Activated naive CD4-positive, alpha-beta T cell treated with anti-CD3 and anti-CD28 coated beads for 36 hours (primary cell): ENCODE measurements at regions of chr10 and their contacts with region 1.

Region 1: GRCh38 chr10:121753726-121754476 is 155.7 kb upstream of the FGFR2 start:
- DNase-seq: peak; percentile 24
- H3K4me3 Mint-ChIP-seq: no peak overlapping the region
- H3K27ac Mint-ChIP-seq: peak overlapping the region; percentile 27
- H3K4me1 Mint-ChIP-seq: peaks cover 19% of the 10 kb centered on the region
- H3K27me3 Mint-ChIP-seq: no peaks in the 10 kb centered on the region

Region 2: DNA sequence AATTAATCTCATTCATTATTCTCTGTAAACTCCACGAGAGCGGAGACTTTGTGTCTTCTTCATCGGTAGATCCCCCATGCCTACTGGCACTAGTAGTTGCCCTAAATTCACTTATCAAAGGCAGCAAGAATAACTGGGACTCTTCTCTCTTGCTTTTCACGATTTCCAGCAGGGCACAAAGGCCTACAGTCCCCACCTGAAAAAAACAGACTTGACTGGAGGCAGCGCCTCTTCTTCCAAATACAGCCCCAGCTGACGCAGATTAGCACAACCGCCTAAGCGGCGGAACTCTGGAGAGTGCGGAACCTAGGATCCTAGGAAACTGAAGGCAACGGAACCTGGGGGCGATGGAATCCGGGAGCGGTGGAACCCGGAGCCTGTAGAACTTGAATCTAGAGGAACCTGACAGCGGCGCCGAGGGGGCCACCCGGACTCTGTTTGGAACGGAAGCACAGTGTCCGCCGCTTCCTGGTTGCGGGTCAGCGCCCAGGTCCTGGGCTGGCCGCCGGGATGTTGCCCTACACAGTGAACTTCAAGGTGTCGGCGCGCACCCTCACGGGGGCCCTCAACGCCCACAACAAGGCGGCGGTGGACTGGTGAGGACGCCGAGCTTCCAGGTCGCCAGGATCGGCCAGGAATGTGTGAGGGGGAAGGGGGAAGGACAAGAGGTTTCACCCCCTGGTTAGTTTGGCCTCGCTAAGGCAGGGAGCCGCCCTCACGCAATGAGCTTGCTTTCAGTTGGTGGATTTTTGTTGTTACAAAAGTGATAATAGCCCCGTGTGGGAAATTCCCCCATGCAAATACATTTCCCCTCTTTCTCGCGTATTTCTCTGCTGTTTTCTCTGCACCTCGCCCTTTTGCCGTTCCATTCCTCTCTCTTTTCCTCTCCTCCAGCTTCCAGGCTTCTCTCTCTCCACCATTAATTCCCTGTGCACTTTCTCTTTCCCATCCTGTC is 902.7 kb before region 1 on chr10 and contains the start of gene WDR11:
- CTCF ChIA-PET with region 1: no interaction called
- intact Hi-C with region 1: loop called (anchors 5 kb)
- DNase-seq: peak; percentile 80
- H3K4me3 Mint-ChIP-seq: peak within 1 kb of the TSS; percentile 99
- H3K27ac Mint-ChIP-seq: peak within 1 kb of the TSS; percentile 93
- H3K4me1 Mint-ChIP-seq: peaks cover 42% of the 10 kb centered on the region
- H3K27me3 Mint-ChIP-seq: no peaks in the 10 kb centered on the region
- total RNA-seq, gene WDR11: 32.4 to 33.6 TPM

Region 3: DNA sequence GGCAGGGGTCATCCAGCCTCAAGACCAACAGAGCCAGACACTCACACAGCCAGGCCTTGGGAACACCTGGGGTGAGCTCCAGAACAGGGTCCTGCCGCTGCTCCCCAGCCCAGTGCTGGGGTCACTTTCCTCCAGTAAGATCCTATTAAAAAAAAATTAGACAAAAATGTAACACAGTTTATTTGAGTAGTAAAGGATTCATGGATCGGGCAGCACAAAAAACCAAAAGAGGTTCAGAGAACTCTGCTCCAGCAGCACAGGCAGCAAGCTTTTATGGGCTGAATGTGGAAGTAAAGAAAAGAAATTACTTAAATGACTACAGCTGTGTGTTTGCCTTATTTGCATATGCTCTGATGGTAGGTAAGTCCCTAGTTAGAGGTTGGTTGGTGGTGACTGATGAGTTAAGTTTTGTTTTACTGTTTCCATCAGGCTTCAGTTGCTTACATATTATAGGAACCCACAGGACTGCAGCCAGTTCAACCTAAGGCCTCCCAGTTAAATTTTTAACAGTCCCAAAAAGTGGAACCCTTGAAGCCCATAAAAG is 75.2 kb before region 1 on chr10:
- CTCF ChIA-PET with region 1: no interaction called
- intact Hi-C with region 1: no loop called
- DNase-seq: no peak
- H3K4me3 Mint-ChIP-seq: no peak overlapping the region
- H3K27ac Mint-ChIP-seq: no peak overlapping the region
- H3K4me1 Mint-ChIP-seq: no peaks in the 10 kb centered on the region
- H3K27me3 Mint-ChIP-seq: peaks cover 11% of the 10 kb centered on the region

Region 4: DNA sequence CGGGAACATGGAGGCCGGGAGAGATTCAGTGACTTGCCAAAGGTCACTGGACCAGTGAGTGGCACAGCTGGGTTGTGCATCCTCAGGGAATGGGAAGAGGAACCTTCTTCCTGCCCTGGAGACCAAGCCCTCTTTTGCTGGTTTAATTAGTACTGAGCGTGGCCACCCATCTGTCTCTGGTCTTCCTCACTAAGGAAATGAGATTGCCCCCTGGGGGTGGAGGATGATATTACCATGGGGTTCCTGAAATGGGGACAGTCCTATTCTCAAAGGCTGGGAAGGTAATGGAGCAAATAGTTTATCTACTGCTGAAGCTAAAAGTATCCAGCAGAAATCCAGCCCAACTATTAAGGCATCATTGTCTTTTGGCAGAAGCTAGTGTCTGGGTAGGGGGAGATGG is 57.0 kb before region 1 on chr10:
- CTCF ChIA-PET with region 1: no interaction called
- intact Hi-C with region 1: no loop called
- DNase-seq: peak; percentile 27
- H3K4me3 Mint-ChIP-seq: no peak overlapping the region
- H3K27ac Mint-ChIP-seq: no peak overlapping the region
- H3K4me1 Mint-ChIP-seq: no peaks in the 10 kb centered on the region
- H3K27me3 Mint-ChIP-seq: peaks cover 2% of the 10 kb centered on the region

Region 5: GRCh38 chr10:121732172-121732571 is 21.7 kb before region 1 on chr10:
- CTCF ChIA-PET with region 1: no interaction called
- intact Hi-C with region 1: no loop called
- DNase-seq: no peak
- H3K4me3 Mint-ChIP-seq: no peak overlapping the region
- H3K27ac Mint-ChIP-seq: no peak overlapping the region
- H3K4me1 Mint-ChIP-seq: no peaks in the 10 kb centered on the region
- H3K27me3 Mint-ChIP-seq: peaks cover 41% of the 10 kb centered on the region

Region 6: GRCh38 chr10:121823993-121824463 is 70.1 kb after region 1 on chr10:
- CTCF ChIA-PET with region 1: no interaction called
- intact Hi-C with region 1: loop called (anchors 5 kb)
- DNase-seq: no peak
- H3K4me3 Mint-ChIP-seq: no peak overlapping the region
- H3K27ac Mint-ChIP-seq: no peak overlapping the region
- H3K4me1 Mint-ChIP-seq: peaks cover 2% of the 10 kb centered on the region
- H3K27me3 Mint-ChIP-seq: no peaks in the 10 kb centered on the region

Region 7: DNA sequence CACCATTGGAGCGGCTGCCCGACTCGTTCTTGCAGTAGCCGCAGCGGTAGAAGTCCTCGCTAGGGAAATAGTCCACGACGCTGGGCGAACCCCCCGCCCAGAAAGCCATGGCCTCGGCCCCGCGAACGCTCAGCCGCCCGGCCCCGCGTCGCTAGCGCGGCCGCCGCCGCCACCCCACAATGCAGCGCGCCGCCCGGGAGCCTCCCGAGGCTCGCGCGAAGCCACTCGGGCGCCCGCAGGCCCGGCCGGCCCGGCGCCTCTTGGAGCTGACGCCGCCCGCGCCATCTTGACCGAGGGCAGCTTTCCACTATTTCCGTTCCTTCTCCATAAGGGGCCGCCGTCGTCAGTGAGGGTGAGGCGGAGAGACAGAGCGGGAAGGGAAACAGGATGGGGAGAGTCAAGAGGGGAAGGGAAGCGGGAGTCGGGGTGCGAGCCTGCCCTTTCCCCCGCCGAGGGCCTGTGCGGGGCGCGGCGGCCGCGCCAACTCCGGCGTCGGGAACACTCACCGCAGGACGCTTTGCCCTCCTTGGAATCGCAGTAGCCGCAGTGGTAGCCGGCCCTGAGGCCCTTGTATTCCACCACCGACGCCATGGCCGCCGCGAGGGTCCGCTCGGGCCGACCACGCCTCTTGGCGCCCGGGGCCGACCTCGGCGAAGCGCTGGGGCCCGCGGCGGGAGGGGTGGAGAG is 174.1 kb after region 1 on chr10 and contains the start of gene ATE1:
- CTCF ChIA-PET with region 1: no interaction called
- intact Hi-C with region 1: loop called (anchors 10 kb)
- DNase-seq: peak; percentile 84
- H3K4me3 Mint-ChIP-seq: peak within 1 kb of the TSS; percentile 89
- H3K27ac Mint-ChIP-seq: peak within 1 kb of the TSS; percentile 94
- H3K4me1 Mint-ChIP-seq: peaks cover 21% of the 10 kb centered on the region
- H3K27me3 Mint-ChIP-seq: no peaks in the 10 kb centered on the region
- total RNA-seq, gene ATE1: 13.6 to 17.5 TPM

Region 8: GRCh38 chr10:122388287-122388997 is 634.5 kb after region 1 on chr10:
- CTCF ChIA-PET with region 1: no interaction called
- intact Hi-C with region 1: loop called (anchors 5 kb)
- DNase-seq: peak; percentile 73
- H3K4me3 Mint-ChIP-seq: no peak overlapping the region
- H3K27ac Mint-ChIP-seq: peak overlapping the region; percentile 80
- H3K4me1 Mint-ChIP-seq: peaks cover 57% of the 10 kb centered on the region
- H3K27me3 Mint-ChIP-seq: no peaks in the 10 kb centered on the region